ENCODE measurements at regions of chr10 and their contacts with region 1.

Region 1: GRCh38 chr10:116287906-116288501 is 15.0 kb upstream of the GFRA1 start:
- DNase-seq: peak; percentile 52
- ATAC-seq: no peak
- H3K4me3 Mint-ChIP-seq: no peak overlapping the region
- H3K27ac Mint-ChIP-seq: no peak overlapping the region
- H3K4me1 Mint-ChIP-seq: peaks cover 2% of the 10 kb centered on the region
- H3K27me3 Mint-ChIP-seq: peaks cover 2% of the 10 kb centered on the region
- CTCF ChIP-seq: no peak

Region 2: GRCh38 chr10:115355162-115355760 is 932.7 kb before region 1 on chr10:
- CTCF ChIA-PET with region 1: no interaction called
- POLR2A ChIA-PET with region 1: no interaction called
- intact Hi-C with region 1: loop called (anchors 5 kb)
- DNase-seq: peak; percentile 33
- ATAC-seq: no peak
- H3K4me3 Mint-ChIP-seq: no peak overlapping the region
- H3K27ac Mint-ChIP-seq: no peak overlapping the region
- H3K4me1 Mint-ChIP-seq: no peaks in the 10 kb centered on the region
- H3K27me3 Mint-ChIP-seq: no peaks in the 10 kb centered on the region
- CTCF ChIP-seq: peak; percentile 67

Region 3: DNA sequence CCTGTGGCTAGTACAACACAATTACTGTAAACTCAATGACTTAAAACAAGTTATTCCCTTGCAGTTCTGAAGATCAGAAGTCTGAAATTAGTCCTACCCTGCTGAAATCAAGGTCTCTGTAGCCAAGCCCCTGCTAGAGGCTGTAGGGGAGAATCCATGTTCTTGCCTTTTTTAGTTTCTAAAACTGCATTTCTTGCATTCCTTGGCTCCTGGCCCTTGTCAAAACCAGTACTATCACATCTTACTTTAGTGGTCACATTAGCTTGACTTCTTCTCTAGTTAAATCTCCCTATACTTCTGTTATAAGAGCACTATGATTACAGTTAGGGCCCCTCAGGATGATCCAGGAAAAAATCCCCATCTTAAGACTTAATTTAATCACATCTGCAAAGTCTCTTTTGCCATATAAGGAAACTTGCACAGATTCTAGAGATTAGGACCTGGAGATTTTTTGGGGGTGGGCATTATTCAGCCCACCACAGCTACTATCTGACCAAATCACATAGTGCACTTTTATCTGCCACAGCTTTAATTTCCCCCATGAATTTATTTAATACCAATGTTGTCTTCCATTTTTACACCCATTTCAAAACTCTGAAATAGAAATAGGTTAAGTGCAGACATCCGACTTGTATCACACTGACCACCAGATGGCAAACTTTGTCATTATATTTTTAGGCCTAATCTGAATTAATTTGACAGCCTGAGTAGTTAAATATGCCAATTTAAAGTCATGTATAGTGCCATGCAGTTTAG is 581.8 kb before region 1 on chr10:
- CTCF ChIA-PET with region 1: interaction called, 4 read pairs
- POLR2A ChIA-PET with region 1: no interaction called
- intact Hi-C with region 1: loop called (anchors 5 kb)
- DNase-seq: peak; percentile 1
- ATAC-seq: no peak
- H3K4me3 Mint-ChIP-seq: no peak overlapping the region
- H3K27ac Mint-ChIP-seq: no peak overlapping the region
- H3K4me1 Mint-ChIP-seq: no peaks in the 10 kb centered on the region
- H3K27me3 Mint-ChIP-seq: no peaks in the 10 kb centered on the region
- CTCF ChIP-seq: peak; percentile 35

Region 4: DNA sequence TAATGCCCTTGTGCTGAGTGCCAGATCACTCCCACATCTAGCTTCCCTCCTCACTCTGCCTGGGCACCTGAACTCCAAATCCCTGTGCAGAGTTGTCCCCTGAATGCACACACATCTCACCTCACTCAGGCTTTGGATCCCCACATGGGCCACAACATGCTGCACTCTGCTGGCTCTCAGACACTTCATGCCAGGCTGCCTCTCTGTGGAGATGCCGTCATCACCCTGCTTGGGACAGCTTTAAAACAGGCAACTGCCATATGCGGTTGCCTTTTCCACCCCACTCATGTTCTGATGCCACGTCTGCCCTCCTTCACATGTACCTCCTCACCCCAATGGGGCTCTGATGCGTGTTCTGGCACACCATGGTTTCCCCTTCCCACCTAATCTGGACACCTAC is 492.0 kb before region 1 on chr10:
- CTCF ChIA-PET with region 1: interaction called, 9 read pairs
- POLR2A ChIA-PET with region 1: no interaction called
- intact Hi-C with region 1: loop called (anchors 5 kb)
- DNase-seq: no peak
- ATAC-seq: no peak
- H3K4me3 Mint-ChIP-seq: no peak overlapping the region
- H3K27ac Mint-ChIP-seq: no peak overlapping the region
- H3K4me1 Mint-ChIP-seq: no peaks in the 10 kb centered on the region
- H3K27me3 Mint-ChIP-seq: no peaks in the 10 kb centered on the region
- CTCF ChIP-seq: no peak